Posterior cingulate gyrus (tissue), 11 donors: ENCODE measurements at regions of chr2 and their contacts with region 1.

Region 1: GRCh38 chr2:221573430-221574230 is 1.5 kb upstream of the EPHA4 start:
- DNase-seq: peak; percentile 79 to 97 (median 90)

Region 2: GRCh38 chr2:219736209-219736608 is 1837.4 kb before region 1 on chr2:
- intact Hi-C with region 1: loop called (anchors 2 kb)
- DNase-seq: no peak

Region 3: GRCh38 chr2:220687231-220687843 is 886.3 kb before region 1 on chr2:
- intact Hi-C with region 1: loop called (anchors 1 kb)
- DNase-seq: peak; percentile 45 to 92 (median 71)

Region 4: DNA sequence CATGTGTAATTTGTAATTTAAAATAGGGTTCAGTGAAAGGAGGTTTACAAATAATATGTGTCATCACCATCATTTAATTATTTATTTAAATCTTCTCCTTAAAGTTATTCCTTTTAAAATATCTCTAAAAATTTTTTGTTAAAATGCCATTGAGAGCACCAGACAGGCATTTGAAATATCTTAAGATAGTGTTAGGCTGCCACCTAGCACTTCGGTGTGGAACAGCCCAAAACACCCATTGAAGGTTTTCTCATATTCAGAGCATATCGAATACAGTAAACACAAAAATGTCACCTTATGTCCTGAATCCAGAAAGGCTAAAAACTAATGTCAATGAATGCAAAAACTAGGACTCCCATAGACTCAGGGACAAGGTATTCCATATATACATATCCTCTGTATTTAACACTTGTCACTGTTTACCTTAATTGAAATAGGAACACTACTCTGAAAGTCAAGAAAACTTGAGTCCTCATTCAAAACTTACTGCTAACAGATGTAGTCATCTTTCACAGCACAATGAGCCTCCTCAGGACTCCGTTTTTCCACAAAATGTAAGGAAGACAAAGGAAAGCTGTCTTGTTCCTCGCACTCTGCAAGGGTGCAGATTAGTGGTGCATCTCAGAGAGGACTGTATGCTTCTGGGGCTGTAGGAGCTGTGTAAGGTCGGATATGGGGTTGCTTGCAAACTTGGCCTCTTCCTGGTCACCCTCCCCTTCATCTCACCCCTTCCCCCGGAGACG is 395.6 kb after region 1 on chr2:
- intact Hi-C with region 1: loop called (anchors 5 kb)
- DNase-seq: peak in 6 of 10 donors; percentile 12 to 69 (median 26)

Region 5: DNA sequence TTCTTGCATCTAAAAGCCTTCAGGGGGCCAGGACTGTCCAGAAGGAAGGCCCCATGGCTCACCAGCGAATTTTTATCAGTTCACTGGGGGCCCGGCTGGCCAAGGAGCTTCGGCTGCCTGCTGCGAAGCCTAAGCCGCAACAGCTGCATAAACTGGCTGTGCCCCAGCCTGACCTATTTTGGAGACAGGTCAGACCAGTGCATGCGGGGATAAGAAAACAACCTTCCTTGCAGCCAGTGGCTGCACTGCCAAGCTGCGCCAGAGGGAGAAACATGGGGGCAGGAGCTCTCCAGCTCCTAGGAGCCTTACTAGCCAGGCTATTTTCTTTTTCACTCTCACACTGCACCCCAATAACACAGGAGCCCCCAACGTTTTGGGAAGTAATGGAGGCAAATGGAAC is 710.0 kb after region 1 on chr2:
- intact Hi-C with region 1: no loop called
- DNase-seq: no peak